ENCODE measurements at regions of chr2 and their contacts with region 1.

Region 1: GRCh38 chr2:111883661-111884591 is at the start of gene ANAPC1:
- DNase-seq: peak; percentile 87
- H3K4me3 Mint-ChIP-seq: peak within 1 kb of the TSS; percentile 90
- H3K27ac Mint-ChIP-seq: peak within 1 kb of the TSS; percentile 91
- H3K4me1 Mint-ChIP-seq: peaks cover 5% of the 10 kb centered on the region
- H3K27me3 Mint-ChIP-seq: no peaks in the 10 kb centered on the region
- CTCF ChIP-seq: no peak
- total RNA-seq, gene ANAPC1: 48.8 and 66.1 TPM in 2 replicates

Region 2: GRCh38 chr2:111678651-111679050 is 205.3 kb before region 1 on chr2:
- CTCF ChIA-PET with region 1: no interaction called
- POLR2A ChIA-PET with region 1: no interaction called
- intact Hi-C with region 1: no loop called
- DNase-seq: no peak
- H3K4me3 Mint-ChIP-seq: no peak overlapping the region
- H3K27ac Mint-ChIP-seq: no peak overlapping the region
- H3K4me1 Mint-ChIP-seq: no peaks in the 10 kb centered on the region
- H3K27me3 Mint-ChIP-seq: no peaks in the 10 kb centered on the region
- CTCF ChIP-seq: no peak

Region 3: DNA sequence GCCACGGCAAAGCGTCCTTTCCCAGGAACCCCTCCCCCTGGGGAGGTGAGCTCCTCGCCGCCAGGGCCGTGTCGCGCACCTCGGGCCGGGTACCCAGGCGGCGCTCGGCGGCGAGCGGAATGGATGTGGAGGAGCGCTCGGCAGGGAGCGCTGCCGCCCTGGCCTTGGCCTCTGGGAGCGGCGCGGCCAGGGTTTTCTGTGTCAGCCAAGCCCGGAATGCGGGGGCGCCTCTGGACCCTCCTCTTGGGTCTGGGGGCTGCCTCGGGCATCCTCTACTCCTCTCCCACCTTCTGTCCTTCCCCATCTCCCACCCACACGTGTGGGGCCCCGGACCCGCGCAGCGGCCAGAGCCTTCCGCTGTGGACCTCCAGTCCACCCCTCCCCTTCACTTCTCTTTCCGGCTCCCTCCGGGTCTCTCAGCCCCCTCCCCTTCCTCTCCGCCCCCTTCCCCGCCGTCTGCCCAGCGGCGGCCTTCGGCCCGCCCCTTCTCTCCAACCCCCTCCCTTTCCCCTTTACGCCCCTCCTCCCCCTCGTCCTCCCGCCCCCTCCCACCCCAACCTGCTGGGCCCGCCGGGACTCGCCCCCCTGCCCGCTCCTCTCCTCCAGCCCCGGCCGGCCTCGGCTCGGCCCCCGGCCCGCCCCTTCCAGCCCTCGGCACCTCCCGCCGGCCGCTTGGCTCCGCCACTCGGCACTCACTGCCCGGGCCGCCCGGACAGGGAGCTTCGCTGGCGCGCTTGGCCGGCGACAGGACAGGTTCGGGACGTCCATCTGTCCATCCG is 14.2 kb after region 1 on chr2 and contains the start of gene MERTK:
- CTCF ChIA-PET with region 1: interaction called, 25 read pairs
- POLR2A ChIA-PET with region 1: interaction called, 5 read pairs
- intact Hi-C with region 1: no loop called
- DNase-seq: peak; percentile 44
- H3K4me3 Mint-ChIP-seq: peak within 1 kb of the TSS; percentile 74
- H3K27ac Mint-ChIP-seq: no peak within 1 kb of the TSS
- H3K4me1 Mint-ChIP-seq: peaks cover 19% of the 10 kb centered on the region
- H3K27me3 Mint-ChIP-seq: peaks cover 32% of the 10 kb centered on the region
- CTCF ChIP-seq: peak; percentile 43
- total RNA-seq, gene MERTK: 0.19 and 0.49 TPM in 2 replicates

Region 4: GRCh38 chr2:112048887-112049286 is 165.0 kb after region 1 on chr2:
- CTCF ChIA-PET with region 1: interaction called, 151 read pairs
- POLR2A ChIA-PET with region 1: interaction called, 33 read pairs
- intact Hi-C with region 1: loop called (anchors 1 kb)
- DNase-seq: peak; percentile 66
- H3K4me3 Mint-ChIP-seq: no peak overlapping the region
- H3K27ac Mint-ChIP-seq: no peak overlapping the region
- H3K4me1 Mint-ChIP-seq: peaks cover 6% of the 10 kb centered on the region
- H3K27me3 Mint-ChIP-seq: no peaks in the 10 kb centered on the region
- CTCF ChIP-seq: peak; percentile 60

Region 5: DNA sequence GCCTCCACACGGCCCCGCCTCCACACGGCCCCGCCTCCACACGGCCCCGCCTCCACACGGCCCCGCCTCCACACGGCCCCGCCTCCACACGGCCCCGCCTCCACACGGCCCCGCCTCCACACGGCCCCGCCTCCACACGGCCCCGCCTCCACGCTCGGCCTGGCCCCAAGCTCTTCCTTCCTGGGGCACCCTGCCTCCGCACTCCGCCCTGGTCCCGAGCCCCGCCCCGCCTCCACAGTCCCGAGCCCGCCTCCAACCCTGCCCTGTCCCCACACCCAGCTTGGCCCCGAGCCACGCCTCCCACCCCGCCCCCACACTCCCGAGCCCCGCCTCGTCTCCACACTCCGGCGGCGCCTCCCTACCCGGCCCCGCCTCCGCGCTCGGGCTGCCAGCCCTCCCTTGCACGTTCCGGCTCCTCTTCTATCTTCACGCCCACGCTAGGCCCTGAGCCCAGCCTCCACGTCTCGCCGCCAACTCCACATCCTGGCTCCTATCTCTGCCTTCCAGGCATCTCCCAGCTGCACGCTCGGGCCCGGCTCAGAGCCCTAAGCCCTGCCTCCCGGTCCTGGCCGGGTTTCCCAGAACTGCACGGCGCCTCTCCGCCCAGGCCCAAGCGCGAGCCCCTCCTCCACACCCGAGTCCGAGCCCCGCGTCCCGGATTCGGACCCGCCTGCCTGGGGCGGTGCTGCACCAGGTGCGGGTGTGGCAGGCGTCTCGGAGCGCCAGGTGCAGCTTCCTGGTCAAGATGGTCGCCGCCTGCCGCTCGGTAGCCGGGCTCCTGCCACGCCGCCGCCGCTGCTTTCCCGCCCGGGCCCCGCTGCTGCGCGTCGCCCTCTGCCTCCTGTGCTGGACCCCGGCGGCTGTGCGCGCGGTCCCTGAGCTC is 171.2 kb after region 1 on chr2 and contains the start of gene TMEM87B:
- CTCF ChIA-PET with region 1: interaction called, 151 read pairs
- POLR2A ChIA-PET with region 1: interaction called, 33 read pairs
- intact Hi-C with region 1: no loop called
- DNase-seq: peak; percentile 98
- H3K4me3 Mint-ChIP-seq: peak within 1 kb of the TSS; percentile 96
- H3K27ac Mint-ChIP-seq: peak within 1 kb of the TSS; percentile 76
- H3K4me1 Mint-ChIP-seq: peaks cover 34% of the 10 kb centered on the region
- H3K27me3 Mint-ChIP-seq: no peaks in the 10 kb centered on the region
- CTCF ChIP-seq: no peak
- total RNA-seq, gene TMEM87B: 29.1 and 39.2 TPM in 2 replicates

Region 6: GRCh38 chr2:112254466-112255239 is 370.7 kb after region 1 on chr2 and contains the start of gene ZC3H8:
- CTCF ChIA-PET with region 1: no interaction called
- POLR2A ChIA-PET with region 1: interaction called, 3 read pairs
- intact Hi-C with region 1: loop called (anchors 10 kb)
- DNase-seq: peak; percentile 90
- H3K4me3 Mint-ChIP-seq: peak within 1 kb of the TSS; percentile 77
- H3K27ac Mint-ChIP-seq: peak within 1 kb of the TSS; percentile 76
- H3K4me1 Mint-ChIP-seq: peaks cover 8% of the 10 kb centered on the region
- H3K27me3 Mint-ChIP-seq: no peaks in the 10 kb centered on the region
- CTCF ChIP-seq: no peak
- total RNA-seq, gene ZC3H8: 20.6 and 30.5 TPM in 2 replicates

Measured in MCF 10A (cell line).